ENCODE measurements at regions of chr12 and their contacts with region 1.

Region 1: GRCh38 chr12:56461235-56462159 is 6.9 kb upstream of the SPRYD4 start:
- DNase-seq: no peak
- ATAC-seq: no peak
- H3K4me3 ChIP-seq: no peak overlapping the region
- H3K4me3 Mint-ChIP-seq: no peak overlapping the region
- H3K27ac ChIP-seq: no peak overlapping the region
- H3K27ac Mint-ChIP-seq: no peak overlapping the region
- H3K4me1 ChIP-seq: peaks cover 0 to 6% of the 10 kb centered on the region in 2 donors
- H3K4me1 Mint-ChIP-seq: peaks cover 0 to 10% (median 5%) of the 10 kb centered on the region in 7 donors
- H3K27me3 ChIP-seq: no peaks in the 10 kb centered on the region
- H3K27me3 Mint-ChIP-seq: no peaks in the 10 kb centered on the region

Region 2: GRCh38 chr12:56206457-56207166 is 254.9 kb before region 1 on chr12:
- CTCF ChIA-PET with region 1: interaction called, 4 read pairs
- POLR2A ChIA-PET with region 1: no interaction called
- intact Hi-C with region 1: loop called (anchors 1 to 5 kb)
- DNase-seq: peak in 5 of 9 donors; percentile 13 to 37 (median 29)
- ATAC-seq: peak; percentile 70
- H3K4me3 ChIP-seq: no peak overlapping the region
- H3K4me3 Mint-ChIP-seq: no peak overlapping the region
- H3K27ac ChIP-seq: no peak overlapping the region
- H3K27ac Mint-ChIP-seq: peak overlapping the region in 6 of 9 donors; percentile 6 to 74 (median 33)
- H3K4me1 ChIP-seq: no peaks in the 10 kb centered on the region
- H3K4me1 Mint-ChIP-seq: peaks cover 0 to 9% (median 6%) of the 10 kb centered on the region in 7 donors
- H3K27me3 ChIP-seq: no peaks in the 10 kb centered on the region
- H3K27me3 Mint-ChIP-seq: no peaks in the 10 kb centered on the region

Region 3: DNA sequence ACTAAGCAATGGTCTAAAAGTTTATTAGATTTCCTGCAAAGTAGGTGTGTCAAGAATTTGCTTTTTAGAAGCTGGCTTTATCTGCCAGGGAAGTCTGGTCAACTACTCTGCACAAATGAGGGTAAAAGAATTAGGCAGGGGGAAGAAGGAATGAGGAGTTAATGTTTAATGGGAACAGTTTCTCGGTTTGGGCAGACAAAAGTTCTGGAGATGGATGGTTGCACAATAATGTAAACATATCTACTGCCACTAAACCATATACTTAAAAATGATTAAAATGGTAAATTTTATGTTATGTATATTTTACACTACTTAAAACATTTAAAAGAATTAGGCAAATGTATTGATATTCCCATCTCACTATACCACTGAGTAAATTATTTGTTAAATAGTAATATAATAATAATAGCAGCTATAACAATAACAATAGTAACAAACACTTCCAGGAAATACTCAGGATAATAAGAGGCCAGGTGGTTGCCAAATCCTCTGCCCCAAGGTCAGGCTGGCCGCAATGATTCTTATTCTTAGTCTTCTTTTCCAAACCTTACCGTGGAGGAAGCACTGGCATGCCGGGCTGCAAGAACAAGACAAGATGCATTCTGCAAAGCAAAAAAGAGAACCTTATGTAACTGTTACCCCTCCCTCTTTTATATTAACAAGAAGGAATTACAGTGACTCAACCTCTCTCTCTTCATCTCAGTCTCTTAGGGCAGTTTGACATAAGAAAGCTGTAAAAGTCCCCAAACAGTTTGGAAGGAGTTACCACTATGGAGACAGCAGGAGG is 175.3 kb before region 1 on chr12:
- CTCF ChIA-PET with region 1: interaction called, 22 read pairs
- POLR2A ChIA-PET with region 1: interaction called, 3 read pairs
- intact Hi-C with region 1: no loop called
- DNase-seq: no peak
- ATAC-seq: no peak
- H3K4me3 ChIP-seq: no peak overlapping the region
- H3K4me3 Mint-ChIP-seq: no peak overlapping the region
- H3K27ac ChIP-seq: no peak overlapping the region
- H3K27ac Mint-ChIP-seq: peak overlapping the region in 4 of 9 donors; percentile 17 to 65 (median 32)
- H3K4me1 ChIP-seq: peaks cover 2 to 6% of the 10 kb centered on the region in 2 donors
- H3K4me1 Mint-ChIP-seq: peaks cover 3 to 24% (median 18%) of the 10 kb centered on the region in 7 donors
- H3K27me3 ChIP-seq: no peaks in the 10 kb centered on the region
- H3K27me3 Mint-ChIP-seq: no peaks in the 10 kb centered on the region

Region 4: DNA sequence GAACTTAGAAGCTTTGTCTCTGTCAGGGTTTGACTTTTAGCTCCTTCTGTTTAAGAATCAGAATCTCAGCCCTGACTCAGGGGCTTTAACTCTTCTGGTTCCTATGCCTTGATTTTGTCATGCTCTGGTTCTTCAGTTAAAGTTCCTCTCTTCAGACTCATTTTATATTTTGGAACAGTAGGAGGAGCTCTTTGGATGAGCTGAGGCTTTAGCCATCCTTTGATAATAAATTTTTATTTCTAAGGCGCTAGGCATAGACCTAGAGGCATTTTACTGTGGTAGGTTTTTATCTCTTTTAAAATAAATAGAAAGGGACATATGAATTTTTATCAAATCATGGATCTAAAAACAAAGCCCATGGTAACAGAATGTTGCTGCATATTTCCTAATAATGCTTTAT is 1531.5 kb after region 1 on chr12:
- CTCF ChIA-PET with region 1: no interaction called
- POLR2A ChIA-PET with region 1: no interaction called
- intact Hi-C with region 1: no loop called
- DNase-seq: no peak
- ATAC-seq: no peak
- H3K4me3 ChIP-seq: no peak overlapping the region
- H3K4me3 Mint-ChIP-seq: no peak overlapping the region
- H3K27ac ChIP-seq: no peak overlapping the region
- H3K27ac Mint-ChIP-seq: no peak overlapping the region
- H3K4me1 ChIP-seq: no peaks in the 10 kb centered on the region
- H3K4me1 Mint-ChIP-seq: no peaks in the 10 kb centered on the region
- H3K27me3 ChIP-seq: no peaks in the 10 kb centered on the region
- H3K27me3 Mint-ChIP-seq: peaks cover 6 to 14% (median 9%) of the 10 kb centered on the region in 5 donors

Measured in naive thymus-derived CD4-positive, alpha-beta T cell (primary cell).